ENCODE measurements at regions of chr4 and their contacts with region 1.

Region 1: DNA sequence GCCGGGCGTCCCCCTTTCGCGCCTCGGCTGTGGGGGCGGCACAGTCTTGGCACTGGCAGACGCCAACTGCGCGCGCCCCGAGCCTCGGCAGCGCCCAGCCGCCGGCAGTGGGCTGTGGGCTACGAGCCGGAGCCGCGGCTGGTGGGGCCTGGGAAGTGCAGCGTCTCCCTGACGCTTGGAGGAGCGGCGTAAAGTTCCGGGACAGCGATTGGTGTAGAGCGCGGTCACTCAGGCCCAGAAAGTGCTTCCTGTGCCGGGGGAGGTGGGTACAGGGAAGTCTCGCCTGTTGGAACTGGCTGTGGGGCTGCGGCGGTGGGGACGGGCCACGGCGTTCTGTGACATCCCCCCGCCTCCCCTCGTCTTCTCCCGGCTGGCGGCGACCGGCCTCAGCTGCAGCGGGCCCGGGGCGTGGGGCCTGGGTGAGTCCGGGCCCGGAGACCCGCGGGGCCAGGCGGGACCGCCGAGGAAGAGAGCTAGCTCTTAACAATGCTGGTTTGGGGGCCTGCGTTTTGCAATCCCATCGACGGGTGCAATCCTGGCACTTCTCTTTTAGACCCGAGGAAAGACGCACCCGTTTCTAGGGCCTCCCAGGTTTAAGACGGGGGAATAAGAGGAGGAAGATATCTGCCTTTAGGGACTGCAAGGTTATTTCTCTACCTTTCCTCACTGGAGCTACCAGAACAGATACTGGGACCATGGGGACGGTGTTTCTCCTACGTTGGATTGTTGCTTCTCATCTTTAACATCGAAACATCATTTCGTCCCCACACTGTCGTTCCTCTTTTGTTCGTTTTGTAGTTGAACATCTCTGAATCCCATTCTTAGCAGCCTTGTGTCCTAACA is at the starts of genes RWDD4 and TRAPPC11:
- DNase-seq: peak; percentile 98 to 99 (median 99)
- H3K4me3 ChIP-seq: peak within 1 kb of the TSS; percentile 31 to 93 (median 86)
- H3K27ac ChIP-seq: peak within 1 kb of the TSS; percentile 66 to 99 (median 92)
- H3K4me1 ChIP-seq: peaks cover 22 to 32% of the 10 kb centered on the region in 2 donors
- H3K27me3 ChIP-seq: no peaks in the 10 kb centered on the region
- CTCF ChIP-seq: peak in 5 of 6 experiments; percentile 22 to 69 (median 50)
- POLR2A ChIP-seq: peak; percentile 90 to 99
- total RNA-seq, gene RWDD4: 39.4 to 157 (median 59.9) TPM
- total RNA-seq, gene TRAPPC11: 34.9 to 116 (median 55.7) TPM

Region 2: DNA sequence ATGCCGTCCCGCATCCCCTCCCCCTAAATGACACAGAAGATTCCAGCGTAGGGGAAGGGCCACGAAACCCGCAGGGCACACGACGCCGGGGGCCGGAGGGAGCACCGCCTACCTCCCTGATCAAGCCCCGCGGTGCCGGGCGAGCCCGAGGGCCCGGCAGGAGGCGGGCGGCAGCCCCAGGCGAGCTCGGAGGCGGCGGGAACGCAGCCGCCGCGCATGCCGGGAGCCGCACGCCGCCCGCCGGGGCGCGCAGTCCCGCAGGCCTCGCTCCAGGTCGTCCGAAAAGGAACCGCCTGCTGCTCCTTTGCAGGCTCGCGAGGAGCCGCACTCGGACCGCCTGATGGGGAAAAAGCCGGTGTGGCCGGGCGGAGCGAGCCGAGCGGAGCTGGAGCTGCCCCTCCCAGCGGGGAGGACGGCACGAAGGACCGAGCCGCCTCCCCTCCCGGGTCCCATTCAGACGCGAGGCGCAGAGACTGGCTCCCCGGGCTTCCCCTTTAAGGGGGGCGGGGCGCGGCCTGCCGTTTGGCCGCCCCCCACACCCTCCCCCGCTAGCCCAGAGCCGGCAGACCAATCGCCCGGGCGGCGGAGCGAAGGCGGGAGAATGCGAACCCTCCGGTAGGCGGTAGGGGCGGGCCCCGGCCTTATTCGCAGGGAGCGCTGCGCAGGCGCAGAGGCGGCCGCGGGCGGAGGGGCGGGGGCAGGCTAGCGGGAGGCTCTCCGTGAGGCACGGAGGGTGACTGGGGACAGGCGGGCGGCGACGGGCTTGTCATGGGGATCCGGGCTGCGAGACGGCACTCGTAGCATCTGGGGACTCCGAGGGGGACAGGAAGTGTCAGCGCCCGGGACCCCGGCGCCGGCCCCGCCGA is 155.0 kb before region 1 on chr4:
- intact Hi-C with region 1: loop called in 1 of 2 experiments (anchors 10 kb)
- DNase-seq: peak; percentile 99 to 100 (median 99)
- H3K4me3 ChIP-seq: peak overlapping the region; percentile 76 to 99 (median 87)
- H3K27ac ChIP-seq: peak overlapping the region; percentile 93 to 99 (median 99)
- H3K4me1 ChIP-seq: peaks cover 23 to 41% of the 10 kb centered on the region in 2 donors
- H3K27me3 ChIP-seq: no peaks in the 10 kb centered on the region
- CTCF ChIP-seq: peak in 4 of 6 experiments; percentile 21 to 34 (median 32)
- POLR2A ChIP-seq: peak; percentile 48 to 90

Region 3: DNA sequence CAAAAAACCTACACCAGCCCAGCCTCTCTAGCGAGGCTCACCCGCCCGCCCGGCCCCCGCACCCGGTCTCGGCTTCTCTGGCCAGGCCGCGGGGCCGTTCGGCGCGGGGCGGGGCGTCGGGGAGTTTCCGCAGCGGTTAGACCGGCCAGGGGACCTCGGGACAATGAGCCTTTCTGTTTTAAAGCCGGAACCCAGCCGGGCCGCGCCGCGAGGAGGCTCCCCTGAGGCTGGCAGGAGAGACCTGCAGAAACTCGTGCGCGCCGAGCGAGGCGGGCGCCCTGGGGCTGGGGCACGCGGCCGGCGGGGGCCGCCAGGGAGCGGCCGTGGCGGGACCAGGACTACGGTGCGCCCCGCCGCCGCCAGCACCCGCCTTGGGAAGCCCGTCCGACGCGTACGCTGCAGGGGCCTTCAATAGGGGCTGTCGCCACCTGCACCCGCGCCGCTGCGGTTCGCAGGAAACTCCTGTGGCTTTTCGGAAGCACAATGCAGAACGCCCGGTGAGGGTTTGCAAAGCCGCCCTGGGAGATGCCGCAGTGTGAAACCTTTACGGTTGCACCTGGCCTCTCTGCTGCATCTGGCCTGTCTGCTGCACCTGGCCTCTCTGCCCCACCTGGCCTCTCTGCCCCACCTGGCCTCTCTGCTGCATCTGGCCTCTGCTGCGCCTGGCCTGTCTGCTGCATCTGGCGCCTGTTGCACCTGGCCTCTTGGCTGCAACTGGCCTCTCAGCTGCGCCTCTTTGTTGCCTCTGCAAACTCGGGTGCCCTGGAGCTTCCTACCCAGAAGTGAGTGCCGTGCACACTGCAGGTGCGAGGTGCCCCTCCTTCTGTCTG is 63.7 kb after region 1 on chr4:
- intact Hi-C with region 1: no loop called
- DNase-seq: peak; percentile 39 to 70 (median 63)
- H3K4me3 ChIP-seq: peak overlapping the region in 2 of 4 donors; percentile 16 to 51
- H3K27ac ChIP-seq: peak overlapping the region in 2 of 5 donors; percentile 33 to 61
- H3K4me1 ChIP-seq: peaks cover 0 to 6% of the 10 kb centered on the region in 2 donors
- H3K27me3 ChIP-seq: no peaks in the 10 kb centered on the region
- CTCF ChIP-seq: no peak
- POLR2A ChIP-seq: no peak

Measured in adrenal gland (tissue), 19 donors.